PC-9 (cell line): ENCODE measurements at regions of chr1 and their contacts with region 1.

Region 1: DNA sequence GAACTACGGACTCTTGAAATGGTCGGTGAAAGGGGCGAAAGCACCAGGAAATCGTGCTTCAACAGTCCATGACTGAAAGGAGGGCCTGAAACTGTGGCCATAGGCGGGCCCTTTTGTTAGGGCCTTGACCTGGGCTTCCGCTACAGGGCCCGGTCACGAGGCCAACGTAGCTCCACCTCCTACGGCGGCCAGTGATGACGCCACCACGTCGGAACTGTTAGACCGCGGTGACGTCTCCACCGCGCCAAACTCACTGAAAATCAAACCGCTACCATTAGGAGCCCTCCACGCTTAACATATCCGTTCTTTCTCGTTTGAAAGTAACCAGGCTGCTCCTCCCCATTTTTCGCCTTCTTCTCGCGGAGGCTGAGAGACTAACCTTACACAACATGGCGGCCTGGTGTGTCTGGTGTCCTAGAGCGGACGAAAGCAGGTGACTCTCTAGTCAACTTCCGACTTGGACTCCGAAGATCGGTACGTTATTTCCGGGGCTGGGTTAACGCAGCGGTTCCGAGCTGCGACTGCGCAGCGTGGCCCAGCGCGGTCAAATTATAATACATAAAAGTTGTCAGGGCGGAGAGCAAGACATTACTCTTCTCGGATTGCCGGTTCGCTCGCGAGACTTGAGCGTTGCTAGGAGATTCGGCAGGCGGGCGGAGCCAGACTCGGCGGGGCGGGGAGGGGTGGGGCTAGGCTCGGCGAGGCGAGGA is 376 bp upstream of the CACYBP start:
- DNase-seq: peak; percentile 94 to 95
- H3K4me3 ChIP-seq: peak overlapping the region; percentile 94
- H3K27ac ChIP-seq: peak overlapping the region; percentile 97
- H3K4me1 ChIP-seq: peaks cover 41% of the 10 kb centered on the region
- H3K27me3 ChIP-seq: no peaks in the 10 kb centered on the region
- CTCF ChIP-seq: no peak

Region 2: DNA sequence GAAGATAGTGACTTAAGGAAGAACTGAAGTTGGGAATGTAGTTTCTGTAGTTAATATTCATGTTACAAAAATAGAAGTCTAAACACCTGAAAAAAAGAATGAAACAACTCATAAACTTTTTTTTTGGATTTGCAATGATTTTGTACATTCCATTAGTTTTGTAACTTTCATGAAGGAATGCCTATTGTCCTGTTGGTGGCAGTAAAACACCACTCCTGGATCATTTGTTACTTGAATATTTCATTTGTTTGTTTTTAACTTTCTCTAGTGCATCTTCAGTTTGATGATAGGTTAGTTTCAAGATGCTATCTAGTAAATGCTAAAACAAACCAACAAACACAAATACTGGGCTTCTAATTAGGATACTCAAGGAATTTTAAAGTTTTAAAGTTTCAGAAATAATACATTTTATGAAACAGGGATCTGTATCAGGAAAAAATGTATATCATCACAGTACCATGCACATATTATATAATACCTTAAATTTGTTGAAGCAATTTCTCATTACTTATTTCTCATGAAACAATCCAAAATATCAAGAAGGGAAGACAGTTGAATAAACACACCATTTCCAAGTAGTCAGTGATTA is 229.3 kb before region 1 on chr1:
- CTCF ChIA-PET with region 1: no interaction called
- POLR2A ChIA-PET with region 1: no interaction called
- intact Hi-C with region 1: loop called (anchors 1 kb)
- DNase-seq: peak in 1 of 2 experiments; percentile 66
- H3K4me3 ChIP-seq: no peak overlapping the region
- H3K27ac ChIP-seq: no peak overlapping the region
- H3K4me1 ChIP-seq: no peaks in the 10 kb centered on the region
- H3K27me3 ChIP-seq: no peaks in the 10 kb centered on the region
- CTCF ChIP-seq: peak; percentile 90

Region 3: GRCh38 chr1:174953285-174954072 is 45.9 kb before region 1 on chr1:
- CTCF ChIA-PET with region 1: no interaction called
- POLR2A ChIA-PET with region 1: interaction called, 15 read pairs
- intact Hi-C with region 1: no loop called
- DNase-seq: peak in 1 of 2 experiments; percentile 79
- H3K4me3 ChIP-seq: no peak overlapping the region
- H3K27ac ChIP-seq: peak overlapping the region; percentile 46
- H3K4me1 ChIP-seq: peaks cover 28% of the 10 kb centered on the region
- H3K27me3 ChIP-seq: no peaks in the 10 kb centered on the region
- CTCF ChIP-seq: no peak

Region 4: DNA sequence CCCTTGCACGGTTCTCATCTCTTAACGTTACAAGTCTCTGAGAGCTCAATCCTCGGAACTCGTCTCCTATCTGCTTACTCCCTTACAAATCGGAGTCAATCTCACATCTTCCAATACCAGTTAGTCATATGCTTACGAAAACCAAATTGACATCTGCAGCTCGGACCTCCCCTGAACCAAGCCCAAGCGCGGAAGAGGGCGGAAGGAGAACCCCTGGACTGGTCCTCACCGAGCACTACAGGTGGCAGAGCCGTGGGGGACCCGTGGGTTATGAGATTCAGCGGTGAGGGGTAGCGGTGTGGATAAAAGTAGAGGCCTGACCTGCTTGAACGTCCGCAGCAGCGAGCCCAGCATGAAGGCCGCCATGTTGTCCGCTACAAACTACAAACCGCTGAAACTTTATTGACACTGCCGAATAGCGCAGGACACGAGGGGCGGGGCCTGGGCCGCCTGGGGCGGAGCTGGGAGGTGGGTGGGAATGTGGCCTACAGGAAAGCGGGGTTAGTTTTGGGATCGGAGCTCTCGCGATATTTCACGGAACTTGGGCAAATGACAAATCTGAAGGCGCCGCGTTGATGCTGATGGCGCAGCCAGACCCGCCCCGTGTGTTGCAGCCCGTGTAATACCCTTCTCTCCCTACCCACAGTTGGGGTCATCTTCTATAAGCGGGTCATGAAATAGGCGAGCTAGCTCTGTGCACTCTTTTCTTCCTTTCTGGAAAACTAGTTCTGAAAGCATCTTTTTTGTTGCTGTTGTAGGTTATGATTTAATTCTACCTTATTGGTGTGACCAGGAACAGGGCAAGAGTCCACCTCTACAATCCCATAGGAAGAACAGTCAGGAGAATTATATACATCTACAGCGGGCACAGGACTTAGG is 23.9 kb after region 1 on chr1 and contains the start of gene MRPS14:
- CTCF ChIA-PET with region 1: no interaction called
- POLR2A ChIA-PET with region 1: interaction called, 16 read pairs
- intact Hi-C with region 1: no loop called
- DNase-seq: peak; percentile 88 to 96
- H3K4me3 ChIP-seq: peak within 1 kb of the TSS; percentile 95
- H3K27ac ChIP-seq: peak within 1 kb of the TSS; percentile 82
- H3K4me1 ChIP-seq: peaks cover 12% of the 10 kb centered on the region; the same call in 1 of the 2 replicates
- H3K27me3 ChIP-seq: no peaks in the 10 kb centered on the region
- CTCF ChIP-seq: no peak
- total RNA-seq, gene MRPS14: 24.1 and 28.8 TPM in 2 replicates

Region 5: GRCh38 chr1:175035865-175036264 is 36.5 kb after region 1 on chr1:
- CTCF ChIA-PET with region 1: no interaction called
- POLR2A ChIA-PET with region 1: no interaction called
- intact Hi-C with region 1: no loop called
- DNase-seq: no peak
- H3K4me3 ChIP-seq: no peak overlapping the region
- H3K27ac ChIP-seq: no peak overlapping the region
- H3K4me1 ChIP-seq: peaks cover 31% of the 10 kb centered on the region
- H3K27me3 ChIP-seq: no peaks in the 10 kb centered on the region
- CTCF ChIP-seq: no peak